GM13977 (cell line): ENCODE measurements at regions of chr16 and their contacts with region 1.

Region 1: DNA sequence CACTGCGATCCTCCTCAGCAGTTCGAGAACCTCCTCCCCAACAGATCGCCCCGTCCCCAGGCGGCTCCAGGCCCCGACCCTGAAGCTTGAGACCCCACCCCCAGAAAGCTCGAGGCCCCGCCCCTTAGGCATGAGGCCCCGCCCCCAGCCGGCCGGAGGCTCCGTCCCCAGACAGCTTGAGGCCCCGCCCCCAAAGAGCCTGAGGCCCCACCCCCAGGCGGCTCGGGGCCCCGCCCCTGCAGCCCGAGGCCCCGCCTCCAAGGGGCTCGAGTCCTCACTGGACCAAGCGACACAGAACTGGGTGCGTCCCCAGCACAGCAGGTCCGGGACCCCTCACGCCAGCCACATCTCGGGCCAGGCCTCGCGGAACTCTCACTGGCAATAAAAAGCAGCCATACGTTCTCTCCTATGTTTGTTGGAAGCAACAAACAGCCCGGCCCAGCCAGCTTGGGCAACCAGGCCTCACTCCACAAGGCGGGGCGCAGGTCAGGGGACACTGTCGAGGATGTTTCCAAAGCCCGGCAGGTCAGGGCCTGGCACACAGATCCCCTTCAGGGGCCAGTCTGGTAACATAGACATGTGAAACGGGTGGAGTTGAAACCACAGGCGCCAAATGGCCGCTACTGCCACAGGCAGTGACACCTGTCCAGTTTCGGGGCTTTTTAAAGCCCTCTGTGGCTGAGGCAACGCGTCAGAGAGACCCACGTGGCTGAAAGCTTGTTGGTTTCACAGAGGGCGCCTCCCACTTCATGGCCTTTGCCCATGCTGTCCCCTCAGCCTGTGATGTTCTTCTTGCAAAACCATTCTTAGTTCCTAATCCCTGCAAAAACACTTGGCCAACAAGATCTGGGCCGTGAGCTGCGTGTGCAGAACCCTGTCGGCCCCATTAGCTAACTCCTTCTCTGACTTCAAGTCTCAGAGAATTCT is 224.2 kb downstream of the PARN start:
- DNase-seq: peak; percentile 67
- CTCF ChIP-seq: no peak

Region 2: DNA sequence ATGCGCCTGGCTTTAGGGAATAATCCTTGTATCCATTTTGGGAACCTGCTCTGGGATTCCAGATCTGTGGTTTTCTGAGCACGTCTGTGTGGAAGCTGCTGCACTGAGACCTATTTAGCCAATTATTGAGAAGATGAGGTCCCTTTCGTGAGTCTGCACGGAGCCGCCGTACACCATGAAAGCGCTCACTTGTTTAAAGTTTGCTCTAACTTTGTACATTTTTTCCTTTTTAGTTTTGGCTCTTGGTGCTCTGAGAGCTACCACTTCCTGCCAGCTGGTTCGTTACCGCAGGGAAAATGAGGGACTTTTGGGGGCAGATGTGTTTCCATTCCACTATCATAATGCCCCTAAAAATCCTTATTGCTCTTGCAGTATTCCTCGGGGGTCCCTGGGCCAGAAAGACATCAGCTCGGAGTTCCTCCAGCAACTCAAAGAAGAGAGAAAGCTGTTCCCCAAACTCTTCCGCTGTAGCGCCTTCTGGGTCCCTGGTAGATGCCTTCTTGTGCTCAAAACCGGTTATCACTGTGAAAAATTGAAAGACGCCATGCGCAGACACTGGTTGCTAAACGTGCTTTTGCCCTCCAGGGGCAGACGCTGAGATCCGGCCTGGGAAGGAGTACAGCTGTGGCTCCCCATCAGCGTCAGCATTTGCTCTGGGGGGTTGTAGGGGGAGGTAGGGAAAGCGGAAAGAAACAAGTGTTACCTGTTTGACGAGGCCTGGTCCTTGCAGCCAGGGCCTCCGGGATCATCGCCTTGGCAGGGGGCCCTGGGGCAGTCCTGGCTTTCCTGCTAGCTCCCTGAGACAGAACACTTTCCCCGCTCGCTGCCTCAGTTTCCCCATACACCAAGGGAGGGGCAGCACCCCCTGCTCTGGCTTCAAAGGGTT is 96.6 kb before region 1 on chr16:
- in situ Hi-C with region 1: loop called (anchors 5 kb)
- DNase-seq: peak; percentile 48
- CTCF ChIP-seq: peak; percentile 8